AG04449 (cell line): ENCODE measurements at regions of chr1 and their contacts with region 1.

Region 1: GRCh38 chr1:232634096-232634495 is 4.2 kb upstream of the SIPA1L2 start:
- DNase-seq: no peak
- H3K4me3 ChIP-seq: no peak overlapping the region
- CTCF ChIP-seq: no peak

Region 2: GRCh38 chr1:232589812-232590743 is 44.0 kb before region 1 on chr1:
- CTCF ChIA-PET with region 1: no interaction called
- POLR2A ChIA-PET with region 1: no interaction called
- DNase-seq: no peak
- H3K4me3 ChIP-seq: no peak overlapping the region
- CTCF ChIP-seq: no peak

Region 3: DNA sequence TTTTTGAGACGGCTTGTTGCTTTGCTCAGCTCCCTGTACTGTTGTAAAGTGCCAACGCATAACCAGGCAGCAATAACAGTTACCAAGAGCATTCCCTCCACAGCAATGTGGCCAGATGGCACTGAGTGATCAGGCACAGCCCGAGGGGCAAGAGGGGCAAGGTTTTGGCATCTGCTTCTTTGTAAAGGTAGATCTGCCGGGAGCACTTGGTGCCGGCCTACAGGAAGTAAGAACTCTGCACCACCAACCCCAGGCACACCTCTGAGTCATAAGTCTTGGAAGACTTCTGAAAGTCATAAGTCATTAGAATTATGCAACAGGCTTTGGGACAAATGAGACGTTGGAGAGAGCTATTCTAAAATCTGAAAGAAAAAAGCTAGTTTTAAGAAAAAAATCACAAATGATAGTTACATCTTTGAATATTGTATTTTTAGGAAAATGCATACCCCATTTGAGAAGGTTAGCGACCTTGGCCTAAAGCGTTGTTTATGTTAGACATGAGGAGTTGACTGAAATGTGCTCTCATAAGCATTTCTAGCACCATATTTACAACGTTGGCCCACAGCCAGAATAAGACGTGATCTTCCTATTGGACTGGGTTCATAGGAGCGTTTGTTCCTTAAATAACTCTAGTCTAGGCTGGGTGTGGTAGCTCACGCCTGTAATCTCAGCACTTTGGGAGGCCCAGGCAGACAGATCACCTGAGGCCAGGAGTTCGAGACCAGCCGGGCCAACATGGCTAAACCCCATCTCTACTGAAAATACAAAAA is 133.4 kb after region 1 on chr1:
- CTCF ChIA-PET with region 1: no interaction called
- POLR2A ChIA-PET with region 1: no interaction called
- DNase-seq: no peak
- H3K4me3 ChIP-seq: no peak overlapping the region
- CTCF ChIP-seq: no peak

Region 4: DNA sequence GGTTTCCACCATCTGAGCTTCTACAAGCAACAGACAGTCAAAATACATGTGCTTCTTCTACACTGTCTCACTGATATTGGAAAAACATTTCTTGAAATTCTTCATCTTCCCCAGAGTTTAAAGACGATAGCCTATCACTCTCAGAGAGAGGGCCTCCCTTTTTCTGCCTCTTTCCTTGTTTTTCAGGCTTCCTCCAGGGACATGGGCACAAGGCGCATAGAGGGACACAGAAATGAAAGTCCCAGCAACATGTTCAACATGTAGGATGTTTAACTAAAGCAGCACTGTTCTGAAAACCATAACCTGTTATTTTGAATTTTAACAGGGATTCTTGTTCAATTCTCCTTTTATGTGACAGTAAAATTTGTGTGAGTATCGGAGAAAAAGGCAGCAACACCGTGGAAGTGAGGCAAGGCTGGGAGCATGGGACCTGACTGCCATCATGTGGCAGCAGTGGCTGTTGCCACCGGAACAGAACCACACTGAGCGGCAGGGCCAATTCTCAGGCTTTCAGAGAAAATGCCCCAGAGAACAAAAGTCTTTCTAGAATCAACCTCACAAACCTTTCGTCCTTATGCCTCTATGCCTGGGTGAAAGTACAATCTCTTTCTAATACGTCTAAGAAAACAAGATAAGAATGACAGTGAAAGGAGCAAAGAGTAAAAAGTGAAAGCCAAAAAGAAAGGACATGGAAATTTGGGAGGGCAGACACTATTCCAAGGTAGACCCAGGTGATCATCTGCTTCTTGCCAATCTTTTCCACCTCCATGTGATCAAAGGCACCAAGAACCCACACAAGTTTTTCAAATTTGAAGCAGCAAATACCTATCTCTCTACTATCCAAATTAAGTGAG is 607.0 kb after region 1 on chr1:
- CTCF ChIA-PET with region 1: interaction called, 12 read pairs
- POLR2A ChIA-PET with region 1: no interaction called
- DNase-seq: no peak
- H3K4me3 ChIP-seq: no peak overlapping the region
- CTCF ChIP-seq: peak; percentile 82